PC-9 (cell line): ENCODE measurements at regions of chr5 and their contacts with region 1.

Region 1: GRCh38 chr5:42950440-42951292 is 89.5 kb downstream of the ANXA2R start:
- DNase-seq: peak; percentile 97 to 100
- H3K4me3 ChIP-seq: peak overlapping the region; percentile 55
- H3K27ac ChIP-seq: peak overlapping the region; percentile 96
- H3K4me1 ChIP-seq: peaks cover 28% of the 10 kb centered on the region
- H3K27me3 ChIP-seq: no peaks in the 10 kb centered on the region
- CTCF ChIP-seq: no peak

Region 2: GRCh38 chr5:42908509-42909488 is 41.9 kb before region 1 on chr5:
- CTCF ChIA-PET with region 1: interaction called, 8 read pairs
- POLR2A ChIA-PET with region 1: interaction called, 4 read pairs
- intact Hi-C with region 1: loop called (anchors 1 kb)
- DNase-seq: peak; percentile 75 to 92
- H3K4me3 ChIP-seq: peak overlapping the region; percentile 28; the same call in 1 of the 2 replicates
- H3K27ac ChIP-seq: no peak overlapping the region
- H3K4me1 ChIP-seq: 0 out of 2 replicates have a peak, but pooled peaks cover 13% of the 10 kb centered on the region
- H3K27me3 ChIP-seq: peaks cover 10% of the 10 kb centered on the region; the same call in 1 of the 2 replicates
- CTCF ChIP-seq: peak; percentile 94

Region 3: DNA sequence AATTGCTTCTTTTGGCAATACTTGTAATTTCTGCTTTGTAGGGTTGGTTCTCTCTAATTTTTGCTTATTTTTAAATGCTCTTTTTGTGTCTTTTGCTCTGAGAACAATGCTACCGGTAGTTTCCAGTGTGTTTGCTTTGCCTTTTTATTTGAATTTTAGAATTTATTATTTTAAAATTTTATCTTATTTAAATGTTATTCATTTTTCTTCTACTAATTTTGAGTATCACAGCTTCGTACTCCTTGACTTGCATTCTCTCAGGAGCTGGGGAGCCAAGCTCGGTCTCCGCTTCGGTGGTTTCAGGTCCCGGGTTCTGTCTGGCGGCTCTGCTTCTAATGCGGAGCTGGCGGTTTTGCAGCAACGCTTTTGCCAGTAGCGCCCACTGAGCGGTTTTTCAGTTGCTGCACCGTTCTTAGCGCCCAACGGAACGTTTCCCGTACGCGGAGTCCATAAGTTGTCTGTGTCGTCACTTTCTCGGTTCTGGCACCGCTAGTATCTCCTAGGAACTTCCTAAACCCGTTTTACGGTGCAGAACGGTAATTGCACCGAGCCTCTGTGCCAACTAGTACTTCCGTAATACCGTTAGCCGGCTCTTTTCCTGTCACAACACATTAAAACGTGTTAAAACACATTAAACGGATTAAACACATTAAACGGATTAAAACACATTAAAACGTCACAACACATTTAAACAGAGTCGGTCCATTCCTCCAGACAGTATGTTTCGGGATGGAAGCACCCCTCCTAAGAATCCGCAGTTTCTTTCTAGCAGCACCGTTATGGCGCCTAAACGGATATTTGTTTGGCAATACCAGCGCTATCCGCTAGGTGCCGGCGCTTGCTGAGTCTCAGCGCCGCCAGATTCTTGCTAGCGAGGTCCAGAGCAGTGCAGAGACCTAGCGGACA is 43.8 kb after region 1 on chr5:
- CTCF ChIA-PET with region 1: interaction called, 6 read pairs
- POLR2A ChIA-PET with region 1: no interaction called
- intact Hi-C with region 1: loop called (anchors 1 kb)
- DNase-seq: no peak
- H3K4me3 ChIP-seq: no peak overlapping the region
- H3K27ac ChIP-seq: no peak overlapping the region
- H3K4me1 ChIP-seq: peaks cover 6% of the 10 kb centered on the region
- H3K27me3 ChIP-seq: no peaks in the 10 kb centered on the region
- CTCF ChIP-seq: no peak

Region 4: DNA sequence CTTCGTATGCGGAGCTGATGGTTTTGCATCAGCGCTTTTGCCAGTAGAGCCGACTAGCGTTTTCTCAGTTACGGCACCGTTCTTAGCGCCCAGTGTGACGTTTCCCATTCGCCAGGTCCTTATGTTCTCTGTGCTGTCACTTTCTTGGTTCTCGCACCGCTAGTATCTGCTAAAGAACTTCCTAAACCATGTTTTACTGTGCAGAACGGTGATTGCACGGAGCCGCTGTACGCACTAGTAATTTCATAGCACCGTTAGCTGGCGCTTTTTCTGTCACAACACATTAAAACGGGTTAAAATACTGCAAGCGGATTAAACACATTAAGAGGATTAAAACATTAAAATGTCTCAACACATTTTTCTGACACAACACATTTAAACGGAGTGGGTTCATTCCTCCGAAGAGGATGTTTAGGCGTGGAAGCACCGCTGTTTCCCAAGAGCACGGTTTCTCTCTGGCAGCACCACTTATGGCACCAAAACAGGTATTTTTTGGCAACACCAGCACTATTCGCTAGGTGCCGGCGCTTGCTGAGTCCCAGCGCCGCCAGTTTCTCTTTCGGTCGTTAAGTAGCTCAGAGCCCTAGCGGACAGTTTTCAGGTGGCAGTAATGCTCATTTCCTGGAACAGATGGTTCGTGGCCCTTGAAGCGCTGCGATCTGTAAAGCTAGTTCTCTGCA is 69.1 kb after region 1 on chr5:
- CTCF ChIA-PET with region 1: interaction called, 3 read pairs
- POLR2A ChIA-PET with region 1: interaction called, 10 read pairs
- intact Hi-C with region 1: no loop called
- DNase-seq: peak; percentile 80 to 83
- H3K4me3 ChIP-seq: peak overlapping the region; percentile 50
- H3K27ac ChIP-seq: no peak overlapping the region
- H3K4me1 ChIP-seq: no peaks in the 10 kb centered on the region
- H3K27me3 ChIP-seq: no peaks in the 10 kb centered on the region
- CTCF ChIP-seq: peak; percentile 61; the same call in 1 of the 2 replicates

Region 5: GRCh38 chr5:43105369-43106289 is 155.0 kb after region 1 on chr5:
- CTCF ChIA-PET with region 1: interaction called, 9 read pairs
- POLR2A ChIA-PET with region 1: interaction called, 9 read pairs
- intact Hi-C with region 1: loop called (anchors 1 kb)
- DNase-seq: peak; percentile 90 to 96
- H3K4me3 ChIP-seq: peak overlapping the region; percentile 51
- H3K27ac ChIP-seq: no peak overlapping the region
- H3K4me1 ChIP-seq: peaks cover 8% of the 10 kb centered on the region; the same call in 1 of the 2 replicates
- H3K27me3 ChIP-seq: no peaks in the 10 kb centered on the region
- CTCF ChIP-seq: peak; percentile 100

Region 6: DNA sequence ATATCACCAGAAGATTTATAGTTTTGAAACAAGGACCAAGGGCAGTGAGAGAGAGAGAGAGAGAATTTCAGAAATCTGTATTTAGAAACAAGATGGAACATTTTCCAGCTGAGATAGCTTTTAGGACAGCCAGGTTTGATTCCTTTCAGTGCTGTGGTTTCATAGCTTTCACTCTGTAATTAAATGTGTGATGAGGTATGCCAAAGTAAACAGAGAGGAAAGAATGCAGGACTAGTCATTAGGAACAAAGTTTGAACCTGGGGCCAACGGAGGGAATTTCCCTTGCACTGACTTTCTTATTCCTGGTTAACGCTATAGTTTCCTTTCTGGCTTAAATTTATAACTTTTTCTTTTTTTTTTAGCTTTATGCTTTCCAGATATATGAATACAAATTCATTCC is 471.5 kb after region 1 on chr5:
- CTCF ChIA-PET with region 1: no interaction called
- POLR2A ChIA-PET with region 1: no interaction called
- intact Hi-C with region 1: loop called (anchors 5 kb)
- DNase-seq: peak; percentile 56 to 95
- H3K4me3 ChIP-seq: no peak overlapping the region
- H3K27ac ChIP-seq: peak overlapping the region; percentile 68
- H3K4me1 ChIP-seq: peaks cover 43% of the 10 kb centered on the region
- H3K27me3 ChIP-seq: no peaks in the 10 kb centered on the region
- CTCF ChIP-seq: no peak